Naive thymus-derived CD4-positive, alpha-beta T cell (primary cell): ENCODE measurements at regions of chr7 and their contacts with region 1.

Region 1: DNA sequence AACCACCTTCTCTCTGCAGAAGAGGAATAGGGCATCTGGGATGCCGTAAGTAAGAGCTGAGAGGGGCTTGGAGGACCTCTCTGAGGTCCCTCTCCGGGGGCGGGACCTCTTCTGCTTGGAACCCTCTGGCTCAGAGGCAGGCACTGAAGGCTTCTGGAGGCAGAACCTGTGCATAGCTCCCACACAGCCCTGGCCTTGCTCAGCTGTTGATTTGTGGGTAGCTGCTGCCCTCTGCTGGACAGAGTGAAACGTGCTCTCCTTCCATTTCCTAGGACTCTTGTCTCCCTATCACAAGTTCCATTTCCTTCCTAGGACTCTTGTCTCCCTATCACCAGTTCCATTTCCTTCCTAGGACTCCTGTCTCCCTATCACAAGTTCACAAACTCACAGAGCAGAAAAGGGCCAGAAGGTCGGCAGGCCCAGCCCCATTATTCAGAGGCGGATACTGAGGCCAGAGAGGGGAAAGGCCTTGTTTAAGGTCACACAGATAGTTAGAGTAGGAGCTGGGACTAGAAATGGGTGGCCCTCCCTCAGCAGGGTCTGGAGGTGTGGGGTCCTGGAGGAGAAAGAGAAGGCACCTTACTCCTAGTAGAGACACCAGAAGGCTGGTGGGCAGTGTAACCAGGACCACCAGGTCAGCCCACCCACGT is 30.3 kb upstream of the GARS1 start:
- DNase-seq: peak; percentile 45 to 77 (median 66)
- ATAC-seq: peak; percentile 98
- H3K4me3 ChIP-seq: no peak overlapping the region
- H3K4me3 Mint-ChIP-seq: peak overlapping the region in 1 of 10 donors; percentile 9
- H3K27ac ChIP-seq: no peak overlapping the region
- H3K27ac Mint-ChIP-seq: peak overlapping the region in 3 of 9 donors; percentile 3 to 39 (median 5)
- H3K4me1 ChIP-seq: no peaks in the 10 kb centered on the region
- H3K4me1 Mint-ChIP-seq: peaks cover 0 to 4% (median 0%) of the 10 kb centered on the region in 7 donors
- H3K27me3 ChIP-seq: no peaks in the 10 kb centered on the region
- H3K27me3 Mint-ChIP-seq: no peaks in the 10 kb centered on the region

Region 2: GRCh38 chr7:29878081-29878688 is 686.2 kb before region 1 on chr7:
- CTCF ChIA-PET with region 1: interaction called, 6 read pairs
- POLR2A ChIA-PET with region 1: no interaction called
- intact Hi-C with region 1: loop called in 1 of 2 experiments (anchors 1 kb)
- DNase-seq: peak in 4 of 9 donors; percentile 17 to 22 (median 20)
- ATAC-seq: peak; percentile 51
- H3K4me3 ChIP-seq: no peak overlapping the region
- H3K4me3 Mint-ChIP-seq: peak overlapping the region in 1 of 10 donors; percentile 4
- H3K27ac ChIP-seq: no peak overlapping the region
- H3K27ac Mint-ChIP-seq: no peak overlapping the region
- H3K4me1 ChIP-seq: peaks cover 0 to 2% of the 10 kb centered on the region in 2 donors
- H3K4me1 Mint-ChIP-seq: peaks cover 0 to 15% (median 10%) of the 10 kb centered on the region in 7 donors
- H3K27me3 ChIP-seq: no peaks in the 10 kb centered on the region
- H3K27me3 Mint-ChIP-seq: peaks cover 0 to 29% (median 11%) of the 10 kb centered on the region in 5 donors

Region 3: GRCh38 chr7:30164567-30164966 is 399.8 kb before region 1 on chr7:
- CTCF ChIA-PET with region 1: no interaction called
- POLR2A ChIA-PET with region 1: no interaction called
- intact Hi-C with region 1: loop called (anchors 1 to 2 kb)
- DNase-seq: no peak
- ATAC-seq: peak; percentile 43
- H3K4me3 ChIP-seq: no peak overlapping the region
- H3K4me3 Mint-ChIP-seq: no peak overlapping the region
- H3K27ac ChIP-seq: no peak overlapping the region
- H3K27ac Mint-ChIP-seq: no peak overlapping the region
- H3K4me1 ChIP-seq: peaks cover 10 to 20% of the 10 kb centered on the region in 2 donors
- H3K4me1 Mint-ChIP-seq: peaks cover 25 to 44% (median 32%) of the 10 kb centered on the region in 7 donors
- H3K27me3 ChIP-seq: no peaks in the 10 kb centered on the region
- H3K27me3 Mint-ChIP-seq: peaks cover 0 to 3% (median 0%) of the 10 kb centered on the region in 5 donors

Region 4: GRCh38 chr7:30510124-30511075 is 54.0 kb before region 1 on chr7:
- CTCF ChIA-PET with region 1: interaction called, 6 read pairs
- POLR2A ChIA-PET with region 1: no interaction called
- intact Hi-C with region 1: loop called (anchors 1 kb)
- DNase-seq: peak in 4 of 9 donors; percentile 14 to 29 (median 25)
- ATAC-seq: peak; percentile 78
- H3K4me3 ChIP-seq: no peak overlapping the region
- H3K4me3 Mint-ChIP-seq: no peak overlapping the region
- H3K27ac ChIP-seq: no peak overlapping the region
- H3K27ac Mint-ChIP-seq: no peak overlapping the region
- H3K4me1 ChIP-seq: no peaks in the 10 kb centered on the region
- H3K4me1 Mint-ChIP-seq: peaks cover 0 to 7% (median 6%) of the 10 kb centered on the region in 7 donors
- H3K27me3 ChIP-seq: no peaks in the 10 kb centered on the region
- H3K27me3 Mint-ChIP-seq: no peaks in the 10 kb centered on the region